MCF 10A (cell line): ENCODE measurements at regions of chr3 and their contacts with region 1.

Region 1: GRCh38 chr3:72665701-72666443 is 182.4 kb downstream of the SHQ1 start:
- DNase-seq: peak; percentile 79
- H3K4me3 Mint-ChIP-seq: no peak overlapping the region
- H3K27ac Mint-ChIP-seq: no peak overlapping the region
- H3K4me1 Mint-ChIP-seq: peaks cover 21% of the 10 kb centered on the region
- H3K27me3 Mint-ChIP-seq: peaks cover 8% of the 10 kb centered on the region
- CTCF ChIP-seq: peak; percentile 67

Region 2: GRCh38 chr3:71978150-71978721 is 687.6 kb before region 1 on chr3:
- CTCF ChIA-PET with region 1: interaction called, 10 read pairs
- POLR2A ChIA-PET with region 1: no interaction called
- intact Hi-C with region 1: loop called (anchors 5 kb)
- DNase-seq: no peak
- H3K4me3 Mint-ChIP-seq: no peak overlapping the region
- H3K27ac Mint-ChIP-seq: no peak overlapping the region
- H3K4me1 Mint-ChIP-seq: peaks cover 20% of the 10 kb centered on the region
- H3K27me3 Mint-ChIP-seq: peaks cover 63% of the 10 kb centered on the region
- CTCF ChIP-seq: no peak

Region 3: DNA sequence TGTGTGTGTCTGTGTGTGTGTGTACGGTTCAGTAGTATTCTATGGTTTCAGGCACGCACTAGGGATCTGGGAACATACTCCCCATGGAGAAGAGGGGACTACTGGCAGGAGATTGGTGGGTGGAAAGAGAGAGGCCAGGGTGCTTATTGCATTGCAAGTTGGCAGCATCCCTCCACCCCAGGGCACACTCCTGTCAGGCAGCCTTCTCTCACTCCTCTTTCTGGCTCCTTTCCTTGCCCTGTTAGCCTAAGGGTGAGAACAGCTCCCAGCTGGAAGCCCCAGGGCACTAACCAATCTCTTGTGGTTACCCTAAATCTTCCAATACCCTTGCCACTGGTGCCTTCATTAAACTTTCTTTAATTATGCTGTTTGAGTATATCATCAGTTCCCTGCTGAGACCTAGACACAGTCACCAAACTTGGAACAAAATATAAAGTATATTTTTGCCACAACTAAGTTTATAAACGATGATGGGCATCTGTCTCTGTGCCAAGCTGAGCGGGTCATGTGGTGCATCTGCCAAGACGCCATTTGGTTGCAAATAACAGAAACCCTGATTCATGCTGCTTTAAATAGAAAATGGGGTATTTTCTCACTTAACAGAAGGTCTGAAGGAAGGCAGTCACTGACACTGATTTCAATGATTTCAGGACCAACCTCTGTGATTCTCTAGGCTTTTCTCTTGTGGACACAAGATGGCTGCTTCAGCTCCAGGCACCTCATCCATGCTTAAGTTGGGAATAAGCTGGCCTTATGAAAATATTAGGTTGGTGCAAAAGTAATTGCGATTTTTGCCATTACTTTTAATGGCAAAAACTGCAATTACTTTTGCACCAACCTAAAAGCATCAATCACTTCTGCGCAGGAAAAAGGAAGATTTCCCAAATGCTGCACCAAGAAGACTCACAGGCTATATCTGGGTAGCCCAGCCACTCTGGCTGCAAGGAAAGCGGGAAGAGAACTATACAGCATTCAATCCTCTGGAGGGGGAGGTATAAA is 404.0 kb before region 1 on chr3:
- CTCF ChIA-PET with region 1: no interaction called
- POLR2A ChIA-PET with region 1: no interaction called
- intact Hi-C with region 1: no loop called
- DNase-seq: peak; percentile 17
- H3K4me3 Mint-ChIP-seq: no peak overlapping the region
- H3K27ac Mint-ChIP-seq: no peak overlapping the region
- H3K4me1 Mint-ChIP-seq: peaks cover 22% of the 10 kb centered on the region
- H3K27me3 Mint-ChIP-seq: peaks cover 55% of the 10 kb centered on the region
- CTCF ChIP-seq: no peak

Region 4: GRCh38 chr3:72339116-72340030 is 326.5 kb before region 1 on chr3:
- CTCF ChIA-PET with region 1: interaction called, 9 read pairs
- POLR2A ChIA-PET with region 1: no interaction called
- intact Hi-C with region 1: loop called (anchors 10 kb)
- DNase-seq: peak; percentile 93
- H3K4me3 Mint-ChIP-seq: no peak overlapping the region
- H3K27ac Mint-ChIP-seq: no peak overlapping the region
- H3K4me1 Mint-ChIP-seq: peaks cover 22% of the 10 kb centered on the region
- H3K27me3 Mint-ChIP-seq: no peaks in the 10 kb centered on the region
- CTCF ChIP-seq: no peak

Region 5: GRCh38 chr3:72353236-72354128 is 312.4 kb before region 1 on chr3:
- CTCF ChIA-PET with region 1: no interaction called
- POLR2A ChIA-PET with region 1: no interaction called
- intact Hi-C with region 1: no loop called
- DNase-seq: no peak
- H3K4me3 Mint-ChIP-seq: no peak overlapping the region
- H3K27ac Mint-ChIP-seq: no peak overlapping the region
- H3K4me1 Mint-ChIP-seq: peaks cover 12% of the 10 kb centered on the region
- H3K27me3 Mint-ChIP-seq: no peaks in the 10 kb centered on the region
- CTCF ChIP-seq: no peak

Region 6: DNA sequence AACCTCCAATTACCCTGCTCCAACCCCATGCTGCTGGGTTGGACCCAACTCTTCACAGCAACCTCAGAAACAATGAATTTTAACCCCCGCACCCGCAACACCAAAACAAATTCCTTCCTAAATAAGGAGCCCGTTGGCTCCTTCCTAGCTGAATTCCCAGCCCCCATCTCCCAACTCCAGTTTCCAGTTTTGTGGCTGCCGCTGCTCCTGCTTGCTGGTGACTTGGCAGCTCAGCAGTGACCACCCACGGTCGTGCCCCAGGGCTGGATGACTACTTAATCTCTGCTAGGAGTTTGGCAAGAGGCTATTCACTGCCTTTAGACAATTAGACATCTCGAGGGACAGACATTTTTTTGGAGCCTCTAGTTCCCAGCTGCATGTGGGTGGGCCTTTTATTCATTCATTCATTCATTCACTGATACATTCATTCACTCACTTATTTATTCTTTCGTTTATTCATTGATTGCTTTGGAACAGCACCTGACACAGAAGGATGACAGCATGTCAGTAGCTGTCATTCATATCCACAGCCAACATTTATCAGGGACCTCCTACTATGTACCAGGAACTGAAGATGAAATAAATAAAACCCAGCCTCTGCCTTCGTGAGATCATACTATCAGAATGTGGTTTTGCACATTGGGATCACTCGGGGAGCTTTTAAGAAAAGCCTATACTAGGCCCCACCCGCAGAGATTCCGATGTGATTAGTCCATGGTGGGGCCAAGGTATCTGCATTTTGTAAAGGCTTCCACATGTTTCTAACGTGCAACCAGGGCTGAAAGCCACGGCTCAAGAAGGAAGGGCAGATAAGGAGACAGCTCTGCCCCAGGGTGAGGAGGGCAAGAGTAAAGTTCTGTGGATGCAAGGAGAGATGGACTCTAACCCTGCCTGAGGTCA is 74.1 kb before region 1 on chr3:
- CTCF ChIA-PET with region 1: interaction called, 5 read pairs
- POLR2A ChIA-PET with region 1: no interaction called
- intact Hi-C with region 1: loop called (anchors 2 kb)
- DNase-seq: peak; percentile 95
- H3K4me3 Mint-ChIP-seq: no peak overlapping the region
- H3K27ac Mint-ChIP-seq: peak overlapping the region; percentile 64
- H3K4me1 Mint-ChIP-seq: peaks cover 27% of the 10 kb centered on the region
- H3K27me3 Mint-ChIP-seq: no peaks in the 10 kb centered on the region
- CTCF ChIP-seq: no peak

Region 7: DNA sequence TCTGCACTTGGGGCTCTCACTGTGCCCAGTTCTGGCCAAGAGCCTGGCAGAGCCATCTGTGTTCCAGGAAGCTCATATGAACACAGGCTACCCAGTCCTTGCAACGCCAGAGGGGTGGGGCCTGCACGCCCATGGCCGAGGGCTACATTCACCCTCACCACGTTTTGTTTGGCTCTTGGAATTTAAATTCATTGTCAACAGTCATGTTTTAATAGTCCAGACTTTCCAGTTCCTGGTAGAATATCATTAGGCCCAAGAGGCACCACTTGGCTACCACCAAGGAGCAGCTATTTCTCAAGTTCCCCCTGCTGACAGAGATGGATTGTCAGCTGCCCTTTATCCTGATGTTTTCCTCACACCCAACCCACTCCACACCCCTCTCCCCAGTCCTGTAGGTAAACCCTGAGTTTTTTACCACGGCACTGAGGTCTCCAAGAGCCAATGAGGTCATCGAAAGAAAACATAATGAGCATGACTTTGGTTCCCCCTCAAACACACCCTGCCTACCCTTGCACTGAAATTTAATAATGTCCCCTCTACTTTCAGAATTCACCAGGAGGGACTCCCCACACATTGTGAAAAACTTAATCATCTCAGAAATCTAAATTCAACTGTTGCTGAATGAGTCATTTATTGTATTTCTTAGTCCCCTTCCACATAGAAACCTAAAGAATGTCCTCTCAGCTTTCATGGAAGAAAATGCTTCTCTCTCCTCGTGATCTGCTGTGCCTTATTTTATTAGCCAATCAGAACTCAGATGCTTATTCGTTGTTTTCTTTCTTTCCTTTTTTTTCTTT is 57.3 kb after region 1 on chr3:
- CTCF ChIA-PET with region 1: interaction called, 16 read pairs
- POLR2A ChIA-PET with region 1: interaction called, 7 read pairs
- intact Hi-C with region 1: no loop called
- DNase-seq: peak; percentile 85
- H3K4me3 Mint-ChIP-seq: peak overlapping the region; percentile 44
- H3K27ac Mint-ChIP-seq: peak overlapping the region; percentile 97
- H3K4me1 Mint-ChIP-seq: peaks cover 24% of the 10 kb centered on the region
- H3K27me3 Mint-ChIP-seq: no peaks in the 10 kb centered on the region
- CTCF ChIP-seq: no peak

Region 8: DNA sequence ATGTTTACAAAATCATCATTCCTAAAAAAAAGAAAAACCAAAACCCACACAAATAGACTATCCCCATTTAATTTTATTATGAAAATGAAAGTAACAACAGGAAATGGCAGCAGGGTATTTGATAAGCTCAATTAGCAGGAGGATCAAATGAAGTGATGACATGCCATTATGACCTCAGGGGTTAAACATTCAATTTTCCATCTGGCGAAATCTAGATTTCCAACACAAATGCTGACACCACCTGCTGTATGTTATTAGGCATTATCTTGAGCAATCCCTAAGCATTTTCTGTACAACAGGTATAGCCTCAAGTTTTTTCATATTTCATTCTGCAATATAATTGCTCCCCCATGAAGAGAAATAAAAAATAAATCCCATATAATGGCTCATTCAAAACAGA is 125.3 kb after region 1 on chr3:
- CTCF ChIA-PET with region 1: interaction called, 30 read pairs
- POLR2A ChIA-PET with region 1: no interaction called
- intact Hi-C with region 1: no loop called
- DNase-seq: peak; percentile 13
- H3K4me3 Mint-ChIP-seq: no peak overlapping the region
- H3K27ac Mint-ChIP-seq: no peak overlapping the region
- H3K4me1 Mint-ChIP-seq: no peaks in the 10 kb centered on the region
- H3K27me3 Mint-ChIP-seq: no peaks in the 10 kb centered on the region
- CTCF ChIP-seq: no peak